ENCODE measurements at regions of chr4 and their contacts with region 1.

Region 1: GRCh38 chr4:77905644-77906263 is 43.1 kb downstream of the MRPL1 start:
- DNase-seq: no peak

Region 2: DNA sequence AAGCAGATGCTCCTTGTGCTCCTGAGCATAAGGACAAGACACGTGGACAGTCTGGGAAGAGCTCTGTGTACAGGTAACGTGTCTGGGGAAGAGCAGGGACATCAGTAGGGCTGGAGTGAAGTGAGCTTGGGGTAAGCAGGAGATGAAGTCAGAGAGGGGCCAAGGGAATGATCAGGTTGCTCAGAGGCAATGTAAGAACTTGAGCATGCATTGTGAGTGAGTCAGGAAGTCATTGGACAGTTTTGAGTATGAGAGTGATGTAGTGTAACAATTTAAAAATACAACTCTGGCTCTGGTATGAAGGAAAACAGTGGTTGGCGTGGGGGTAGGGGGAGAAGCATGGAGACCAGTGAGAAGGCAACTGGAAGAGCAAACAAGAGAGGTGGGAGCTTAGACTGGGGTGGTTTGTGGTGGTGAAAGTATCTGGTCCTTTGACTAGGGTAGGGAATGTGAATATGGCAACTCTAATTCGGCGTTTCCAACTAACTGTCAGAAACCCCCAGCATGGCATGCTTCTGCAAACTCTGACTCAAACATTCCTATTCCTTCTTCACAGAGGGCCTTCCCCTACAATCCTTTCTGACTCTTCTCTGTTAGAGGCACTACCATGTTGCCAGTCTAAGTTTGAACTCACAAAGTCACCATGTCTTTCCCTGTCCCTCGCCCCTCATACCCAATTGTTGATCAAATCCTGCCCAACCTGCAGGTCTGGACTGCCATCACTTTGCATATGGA is 1542.0 kb before region 1 on chr4:
- intact Hi-C with region 1: loop called in 1 of 2 experiments (anchors 10 kb)
- DNase-seq: no peak

Region 3: GRCh38 chr4:77862478-77863216 is 43.1 kb before region 1 on chr4 and contains the start of gene MRPL1:
- intact Hi-C with region 1: no loop called
- DNase-seq: peak; percentile 96
- total RNA-seq, gene MRPL1: 38.4 to 45.3 TPM

Region 4: DNA sequence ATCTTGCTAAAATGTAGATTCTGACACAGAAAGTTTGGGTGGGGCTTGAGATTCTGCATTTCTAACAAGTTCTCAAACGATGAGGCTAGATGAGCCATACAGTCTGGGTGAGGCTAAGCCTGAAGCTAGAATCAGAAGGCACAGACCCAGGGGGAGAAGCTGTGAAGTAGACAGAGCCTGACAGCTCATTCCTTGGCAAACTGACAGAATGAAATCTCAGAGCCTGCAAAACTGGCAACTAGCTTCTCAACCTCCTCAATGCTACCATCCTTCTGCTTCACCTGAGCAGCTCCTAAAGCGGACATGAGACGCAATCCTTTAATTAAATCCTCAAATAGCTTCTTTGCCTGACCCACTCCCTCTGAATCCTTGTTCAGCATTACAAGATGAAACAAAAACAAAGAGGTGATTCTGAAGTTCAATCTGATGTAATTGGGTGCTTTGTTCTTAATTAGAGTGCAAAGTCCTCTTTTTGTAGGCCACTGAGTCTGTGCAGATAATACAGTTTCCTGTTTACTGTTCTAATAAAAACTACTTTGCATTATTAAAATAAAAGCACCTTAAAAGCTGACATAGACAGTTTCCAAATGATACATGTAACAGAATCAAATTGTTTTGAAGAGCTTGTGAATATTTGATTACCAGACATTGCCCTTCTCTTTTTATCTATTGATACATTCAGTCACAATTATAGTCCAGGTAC is 799.4 kb after region 1 on chr4:
- intact Hi-C with region 1: no loop called
- DNase-seq: no peak

Measured in posterior vena cava (tissue), 2 donors.